Endothelial cell of umbilical vein (primary cell): ENCODE measurements at regions of chr11 and their contacts with region 1.

Region 1: DNA sequence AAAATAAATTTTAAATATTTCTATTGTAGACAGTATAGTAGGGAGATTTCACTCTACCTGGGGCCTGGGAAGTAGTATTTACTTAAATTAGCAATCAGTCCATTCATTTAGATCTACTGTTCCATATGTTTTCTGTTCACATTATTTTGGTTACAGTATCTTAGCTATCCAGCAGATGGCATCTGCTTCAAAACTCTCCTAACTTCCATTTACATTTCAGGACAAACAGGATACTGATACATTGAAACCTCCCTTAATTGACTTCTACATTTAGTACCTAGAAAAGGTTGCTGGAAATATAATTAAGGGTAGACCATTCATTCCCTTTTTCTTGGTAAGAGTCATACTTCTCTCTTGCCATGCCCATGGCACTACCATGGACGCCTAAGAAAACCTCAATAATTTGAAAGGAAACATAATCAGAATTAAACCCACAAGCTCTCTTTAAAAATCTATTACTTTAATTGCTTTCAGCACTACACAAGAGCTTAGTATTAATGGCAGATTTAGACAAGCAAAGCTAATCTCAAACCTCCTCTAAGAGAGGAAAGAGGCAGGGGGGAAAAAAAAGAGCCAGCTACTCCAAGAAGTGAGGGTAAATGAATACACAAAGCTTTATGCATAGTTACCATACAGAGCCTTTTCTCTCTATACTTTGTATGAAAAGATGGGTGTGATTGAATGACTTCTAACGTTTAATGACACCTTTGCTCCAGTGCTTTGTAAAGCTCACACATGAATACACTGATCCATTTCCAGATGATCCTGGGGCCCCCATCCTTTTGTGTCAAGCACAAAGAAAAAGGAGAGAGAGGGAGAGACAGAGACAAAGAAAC is 131.2 kb upstream of the MTMR2 start:
- DNase-seq: peak; percentile 71
- H3K4me3 ChIP-seq: no peak overlapping the region
- H3K27ac ChIP-seq: no peak overlapping the region
- H3K4me1 ChIP-seq: peaks cover 14% of the 10 kb centered on the region
- H3K27me3 ChIP-seq: no peaks in the 10 kb centered on the region
- CTCF ChIP-seq: peak; percentile 37 to 39
- POLR2A ChIP-seq: no peak

Region 2: DNA sequence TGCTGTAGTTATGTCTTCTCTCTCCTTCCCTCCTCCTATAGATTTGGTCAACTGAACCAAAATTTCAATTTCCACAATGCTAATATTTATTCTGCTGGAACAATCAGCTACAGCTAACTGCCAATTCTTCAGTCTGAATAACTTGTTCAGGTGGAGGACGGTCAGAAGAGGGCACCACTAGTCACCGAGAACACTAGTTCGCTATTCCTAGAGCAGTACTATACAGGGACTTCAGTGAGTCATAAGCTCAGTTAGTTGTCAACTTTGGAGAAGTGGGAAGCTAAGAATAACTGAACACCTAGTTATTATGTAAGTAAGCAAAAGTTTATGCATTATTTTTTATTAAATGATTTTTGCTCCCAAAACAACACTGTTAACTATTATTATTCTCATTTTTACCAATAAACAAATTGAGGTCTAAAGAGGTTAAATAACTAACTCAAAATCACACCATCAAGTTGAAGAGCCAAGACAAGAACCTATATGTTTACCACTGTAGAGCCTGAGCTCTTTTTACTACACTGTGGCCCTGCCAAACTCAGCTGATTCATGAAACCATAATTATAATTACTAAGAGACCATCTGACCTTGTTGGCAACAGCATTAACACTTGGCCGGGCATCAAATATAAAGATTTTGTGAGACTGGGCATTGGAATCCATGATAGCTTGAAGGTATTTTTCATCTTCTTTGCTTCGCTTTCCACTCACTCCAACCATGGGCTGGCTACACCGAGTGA is 205.8 kb before region 1 on chr11:
- CTCF ChIA-PET with region 1: interaction called, 10 read pairs
- POLR2A ChIA-PET with region 1: no interaction called
- dilution Hi-C with region 1: no loop called
- intact Hi-C with region 1: no loop called
- DNase-seq: peak; percentile 82
- H3K4me3 ChIP-seq: no peak overlapping the region
- H3K27ac ChIP-seq: no peak overlapping the region
- H3K4me1 ChIP-seq: no peaks in the 10 kb centered on the region
- H3K27me3 ChIP-seq: no peaks in the 10 kb centered on the region
- CTCF ChIP-seq: peak; percentile 46 to 54
- POLR2A ChIP-seq: no peak

Region 3: DNA sequence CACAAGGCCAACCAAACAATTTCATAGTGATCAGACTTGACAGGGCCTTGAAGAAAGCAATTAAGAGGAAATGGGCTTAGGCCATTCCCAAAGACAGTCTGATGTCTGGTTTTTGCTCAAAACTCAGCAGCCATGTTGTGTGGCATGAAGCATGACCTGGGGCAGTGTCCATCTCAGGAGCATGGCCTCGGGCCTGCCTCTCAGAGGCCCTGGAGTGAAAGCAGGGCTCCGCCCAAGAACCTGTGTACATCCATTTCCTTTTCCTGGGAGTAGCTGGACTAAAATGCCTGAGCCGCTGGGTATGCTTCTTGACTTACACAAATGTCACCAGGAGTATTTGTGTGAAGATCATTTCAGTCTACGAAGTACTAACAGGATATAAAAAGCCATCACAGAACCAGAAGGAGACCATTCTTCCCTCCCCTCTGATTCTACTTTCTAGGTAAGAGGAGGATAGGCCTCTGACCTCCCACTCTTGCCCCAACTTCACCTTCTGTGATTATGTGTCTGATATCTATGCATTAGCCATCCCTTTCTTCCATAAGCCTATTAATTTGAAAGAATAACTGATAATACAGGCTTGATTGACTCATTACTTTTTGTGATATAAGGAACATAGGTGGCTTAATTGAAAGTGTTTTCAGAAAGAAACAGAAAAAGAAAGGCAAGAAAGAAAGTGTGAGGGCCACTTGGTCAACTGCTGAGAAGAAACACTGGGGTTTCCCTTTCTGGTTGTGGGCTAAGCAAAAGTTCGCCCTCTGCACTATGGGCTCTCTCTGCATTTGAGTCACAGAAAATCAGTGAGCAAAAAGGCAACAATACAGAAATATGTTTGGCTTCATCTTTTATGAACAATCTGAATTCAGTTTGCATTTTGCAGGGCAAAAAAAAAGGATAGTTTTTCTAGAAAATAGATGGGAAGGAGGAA is 57.4 kb after region 1 on chr11:
- CTCF ChIA-PET with region 1: interaction called, 11 read pairs
- POLR2A ChIA-PET with region 1: no interaction called
- dilution Hi-C with region 1: no loop called
- intact Hi-C with region 1: loop called (anchors 2 kb)
- DNase-seq: no peak
- H3K4me3 ChIP-seq: no peak overlapping the region
- H3K27ac ChIP-seq: peak overlapping the region; percentile 8
- H3K4me1 ChIP-seq: peaks cover 11% of the 10 kb centered on the region
- H3K27me3 ChIP-seq: no peaks in the 10 kb centered on the region
- CTCF ChIP-seq: no peak
- POLR2A ChIP-seq: no peak

Region 4: DNA sequence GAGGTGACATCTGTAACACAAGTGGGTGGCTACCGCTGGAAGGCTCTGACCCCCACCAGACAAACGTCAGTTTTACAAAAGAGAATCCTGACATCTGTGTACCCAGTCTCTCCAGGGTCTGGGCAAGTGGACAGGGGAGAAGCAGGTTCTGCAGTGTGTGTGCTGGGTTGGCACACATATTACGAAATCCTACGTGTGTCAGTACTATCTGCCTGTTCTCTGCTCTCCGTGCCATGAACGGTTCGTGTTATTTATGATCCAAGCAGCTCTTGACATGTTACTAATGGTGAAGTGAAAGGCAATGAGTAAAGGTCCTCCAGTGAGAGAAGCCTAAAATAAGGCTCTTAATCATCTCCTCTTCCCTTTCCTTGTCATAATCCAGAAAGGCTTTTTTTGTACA is 70.3 kb after region 1 on chr11:
- CTCF ChIA-PET with region 1: no interaction called
- POLR2A ChIA-PET with region 1: no interaction called
- dilution Hi-C with region 1: no loop called
- intact Hi-C with region 1: no loop called
- DNase-seq: no peak
- H3K4me3 ChIP-seq: no peak overlapping the region
- H3K27ac ChIP-seq: no peak overlapping the region
- H3K4me1 ChIP-seq: peaks cover 4% of the 10 kb centered on the region
- H3K27me3 ChIP-seq: no peaks in the 10 kb centered on the region
- CTCF ChIP-seq: no peak
- POLR2A ChIP-seq: no peak

Region 5: GRCh38 chr11:96162816-96163499 is 107.9 kb after region 1 on chr11:
- CTCF ChIA-PET with region 1: interaction called, 14 read pairs
- POLR2A ChIA-PET with region 1: no interaction called
- dilution Hi-C with region 1: no loop called
- intact Hi-C with region 1: no loop called
- DNase-seq: peak; percentile 93
- H3K4me3 ChIP-seq: no peak overlapping the region
- H3K27ac ChIP-seq: peak overlapping the region; percentile 80
- H3K4me1 ChIP-seq: peaks cover 31% of the 10 kb centered on the region
- H3K27me3 ChIP-seq: no peaks in the 10 kb centered on the region
- CTCF ChIP-seq: no peak
- POLR2A ChIP-seq: no peak

Region 6: DNA sequence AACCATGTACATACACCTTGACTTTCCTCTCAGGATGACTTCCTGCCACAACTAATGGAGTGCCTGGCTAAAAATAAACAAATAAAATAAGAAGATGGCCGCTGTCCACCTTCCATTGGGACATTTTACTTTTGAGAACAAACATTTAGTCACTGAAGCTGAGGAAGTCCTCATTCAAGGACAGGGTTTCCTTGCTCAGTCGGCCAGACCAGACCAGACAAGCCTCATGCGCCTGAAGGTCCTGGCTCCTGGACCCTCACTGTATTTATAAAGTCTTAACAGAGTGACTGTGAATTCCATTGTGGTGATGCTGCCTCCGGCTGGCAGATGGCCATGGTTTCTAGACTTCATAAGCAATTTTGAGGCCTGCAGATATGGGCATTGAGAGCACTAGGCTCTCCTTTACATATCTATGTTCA is 173.4 kb after region 1 on chr11:
- CTCF ChIA-PET with region 1: interaction called, 20 read pairs
- POLR2A ChIA-PET with region 1: interaction called, 3 read pairs
- dilution Hi-C with region 1: no loop called
- intact Hi-C with region 1: loop called (anchors 1 kb)
- DNase-seq: peak; percentile 96
- H3K4me3 ChIP-seq: peak overlapping the region in 1 of 3 experiments; percentile 9
- H3K27ac ChIP-seq: peak overlapping the region; percentile 98
- H3K4me1 ChIP-seq: peaks cover 50% of the 10 kb centered on the region
- H3K27me3 ChIP-seq: no peaks in the 10 kb centered on the region
- CTCF ChIP-seq: no peak
- POLR2A ChIP-seq: no peak

Region 7: DNA sequence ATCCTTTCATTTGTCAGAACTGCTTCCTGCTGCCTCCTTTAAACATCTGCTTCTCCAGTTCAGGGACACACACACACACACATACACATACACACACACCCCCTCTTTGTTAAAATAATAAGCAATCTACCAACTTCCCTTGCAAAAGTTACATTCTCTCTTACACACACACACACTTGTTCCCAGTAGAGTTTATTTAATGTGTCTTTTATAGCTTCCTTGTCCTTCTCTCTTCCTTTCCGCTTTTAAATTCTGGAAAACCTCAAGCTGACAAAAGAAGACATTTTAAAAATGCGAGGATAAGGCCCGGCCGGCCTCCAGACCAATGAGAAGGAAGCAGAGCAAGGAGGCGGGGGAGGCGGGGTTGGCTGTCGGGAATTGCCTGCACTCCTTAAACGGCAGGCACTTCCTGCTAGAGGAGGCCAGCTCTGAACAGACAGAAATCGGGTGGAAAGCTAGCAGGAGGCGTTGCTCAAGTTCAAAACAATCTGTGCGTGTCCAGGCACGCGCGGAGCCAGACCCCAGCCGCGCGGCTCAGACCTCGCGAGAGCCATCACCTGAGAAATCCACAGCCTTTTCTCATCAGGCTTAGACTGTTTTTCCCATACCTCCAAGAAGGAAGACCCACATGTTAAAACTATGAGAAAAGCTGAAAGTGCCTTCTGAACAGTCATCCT is 188.0 kb after region 1 on chr11:
- CTCF ChIA-PET with region 1: interaction called, 27 read pairs
- POLR2A ChIA-PET with region 1: no interaction called
- dilution Hi-C with region 1: no loop called
- intact Hi-C with region 1: loop called (anchors 1 kb)
- DNase-seq: peak; percentile 97
- H3K4me3 ChIP-seq: peak overlapping the region in 2 of 3 experiments; percentile 42 to 58
- H3K27ac ChIP-seq: peak overlapping the region; percentile 74
- H3K4me1 ChIP-seq: peaks cover 19% of the 10 kb centered on the region
- H3K27me3 ChIP-seq: no peaks in the 10 kb centered on the region
- CTCF ChIP-seq: no peak
- POLR2A ChIP-seq: peak; percentile 46